Esophagus muscularis mucosa (tissue), 4 donors: ENCODE measurements at regions of chr20 and their contacts with region 1.

Region 1: DNA sequence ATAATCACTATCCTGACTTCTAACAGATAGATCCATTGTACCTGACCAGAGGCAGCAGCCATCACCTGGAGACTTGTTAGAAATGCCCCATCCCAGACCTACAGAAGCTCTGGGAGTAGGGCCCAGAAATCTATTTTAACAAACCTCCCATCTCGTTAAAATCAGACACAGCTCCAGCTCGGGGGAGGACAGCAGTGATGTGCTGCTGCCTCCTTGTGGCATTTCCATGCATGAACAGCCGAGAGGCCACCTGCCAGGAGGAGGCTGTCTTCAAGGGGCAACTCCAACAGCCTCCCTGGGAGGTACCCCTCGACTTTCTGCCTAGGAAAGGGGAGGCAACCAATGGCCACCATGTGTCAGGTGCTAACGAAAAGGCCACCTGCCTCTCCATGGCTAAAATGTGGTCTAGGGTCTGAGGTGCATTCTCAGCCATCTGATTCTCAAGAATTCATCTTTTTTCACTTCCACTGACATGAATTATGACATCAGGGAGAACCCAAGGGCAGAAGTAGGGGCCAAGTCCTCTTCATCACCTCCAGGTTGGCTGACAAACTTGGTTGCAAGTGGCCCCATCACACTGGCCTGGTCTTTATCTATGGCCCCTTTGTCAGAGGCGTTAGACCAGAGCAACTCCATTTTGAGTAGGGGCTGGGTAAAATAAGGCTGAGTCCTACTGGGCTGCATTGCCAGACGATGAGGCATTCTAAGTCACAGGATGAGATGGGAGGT is 12.2 kb upstream of the KCNK15 start:
- DNase-seq: no peak
- H3K4me3 ChIP-seq: no peak overlapping the region
- H3K27ac ChIP-seq: peak overlapping the region in 2 of 4 donors; percentile 41 to 78
- H3K4me1 ChIP-seq: peaks cover 37 to 76% (median 59%) of the 10 kb centered on the region in 4 donors
- H3K27me3 ChIP-seq: no peaks in the 10 kb centered on the region
- CTCF ChIP-seq: peak; percentile 95 to 99 (median 97)
- EP300 ChIP-seq: no peak
- POLR2A ChIP-seq: no peak

Region 2: GRCh38 chr20:44683263-44684046 is 50.0 kb before region 1 on chr20:
- intact Hi-C with region 1: loop called (anchors 2 kb)
- DNase-seq: no peak
- H3K4me3 ChIP-seq: no peak overlapping the region
- H3K27ac ChIP-seq: no peak overlapping the region
- H3K4me1 ChIP-seq: peaks cover 10 to 20% (median 19%) of the 10 kb centered on the region in 4 donors
- H3K27me3 ChIP-seq: no peaks in the 10 kb centered on the region
- CTCF ChIP-seq: peak; percentile 35 to 54 (median 39)
- EP300 ChIP-seq: no peak
- POLR2A ChIP-seq: no peak

Region 3: GRCh38 chr20:44714696-44715482 is 18.6 kb before region 1 on chr20 and contains the start of gene CCN5:
- intact Hi-C with region 1: no loop called
- DNase-seq: no peak
- H3K4me3 ChIP-seq: peak within 1 kb of the TSS; percentile 42 to 55 (median 49)
- H3K27ac ChIP-seq: peak within 1 kb of the TSS; percentile 80 to 88 (median 85)
- H3K4me1 ChIP-seq: peaks cover 46 to 81% (median 73%) of the 10 kb centered on the region in 4 donors
- H3K27me3 ChIP-seq: no peaks in the 10 kb centered on the region
- CTCF ChIP-seq: no peak
- EP300 ChIP-seq: no peak
- POLR2A ChIP-seq: no peak
- total RNA-seq, gene CCN5: 350 to 833 (median 456) TPM